Dorsolateral prefrontal cortex (tissue), 120 donors: ENCODE measurements at regions of chr15 and their contacts with region 1.

Region 1: DNA sequence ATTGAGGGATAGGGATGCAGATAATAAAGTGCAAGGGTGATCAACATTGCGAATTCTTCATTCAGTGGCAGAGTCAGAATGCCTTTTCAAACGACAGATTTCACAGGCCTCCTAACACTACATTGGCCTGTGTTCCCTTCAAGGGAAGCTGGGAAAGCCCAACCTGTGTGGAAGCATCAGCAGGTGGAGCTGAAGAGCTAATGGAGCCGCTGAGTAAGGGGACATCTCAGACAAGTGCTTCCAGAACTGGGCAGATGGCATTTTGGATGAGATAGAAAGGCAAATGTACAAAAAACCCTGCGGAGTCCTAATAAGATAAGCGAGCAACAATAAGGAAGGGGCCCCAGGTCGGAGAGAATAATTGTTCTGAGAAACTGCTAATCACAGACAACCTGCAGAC is 8.5 kb upstream of the SLC24A5 start:
- DNase-seq: peak in 1 of 10 donors; percentile 40
- H3K4me3 ChIP-seq: no peak overlapping the region
- H3K27ac ChIP-seq: no peak overlapping the region
- H3K27me3 ChIP-seq: peaks cover 0 to 5% (median 0%) of the 10 kb centered on the region in 45 donors
- CTCF ChIP-seq: peak in 13 of 56 donors; percentile 10 to 48 (median 22)

Region 2: GRCh38 chr15:47961401-47962090 is 150.7 kb before region 1 on chr15:
- intact Hi-C with region 1: no loop called
- DNase-seq: no peak
- H3K4me3 ChIP-seq: no peak overlapping the region
- H3K27ac ChIP-seq: no peak overlapping the region
- H3K27me3 ChIP-seq: no peaks in the 10 kb centered on the region
- CTCF ChIP-seq: no peak

Region 3: DNA sequence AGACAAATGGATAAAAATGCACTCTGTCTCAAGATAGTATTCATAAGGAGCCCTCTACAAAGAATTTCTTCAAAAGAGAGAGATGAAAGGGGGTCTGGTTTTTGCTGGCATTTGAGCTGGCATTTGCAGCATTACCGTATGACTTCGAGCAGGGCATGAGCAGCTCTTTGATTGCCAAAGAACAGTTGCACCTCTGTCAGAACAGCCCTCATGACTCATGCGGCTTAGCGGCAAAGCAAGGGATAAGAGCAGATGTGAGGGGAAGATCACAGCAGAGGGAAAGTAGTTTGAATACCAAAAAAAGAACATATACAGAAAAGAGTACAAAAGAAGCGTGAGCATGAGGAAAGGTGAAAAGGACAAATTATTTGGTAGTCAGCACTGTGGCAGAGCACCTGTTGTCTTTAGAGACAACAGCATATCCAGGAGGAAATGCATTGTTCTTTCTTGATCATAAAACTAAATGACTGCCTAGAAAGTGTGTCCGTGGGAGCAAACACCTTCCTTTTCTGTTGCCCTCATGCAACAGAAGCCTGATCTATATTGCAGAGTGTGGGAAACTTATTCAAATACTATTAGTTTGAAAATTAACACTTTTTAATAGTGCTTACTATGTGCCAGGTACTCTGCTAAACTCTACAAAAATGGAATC is 72.0 kb before region 1 on chr15:
- intact Hi-C with region 1: loop called in 1 of 2 experiments (anchors 10 kb)
- DNase-seq: peak in 4 of 10 donors; percentile 25 to 63 (median 43)
- H3K4me3 ChIP-seq: no peak overlapping the region
- H3K27ac ChIP-seq: no peak overlapping the region
- H3K27me3 ChIP-seq: no peaks in the 10 kb centered on the region
- CTCF ChIP-seq: no peak

Region 4: DNA sequence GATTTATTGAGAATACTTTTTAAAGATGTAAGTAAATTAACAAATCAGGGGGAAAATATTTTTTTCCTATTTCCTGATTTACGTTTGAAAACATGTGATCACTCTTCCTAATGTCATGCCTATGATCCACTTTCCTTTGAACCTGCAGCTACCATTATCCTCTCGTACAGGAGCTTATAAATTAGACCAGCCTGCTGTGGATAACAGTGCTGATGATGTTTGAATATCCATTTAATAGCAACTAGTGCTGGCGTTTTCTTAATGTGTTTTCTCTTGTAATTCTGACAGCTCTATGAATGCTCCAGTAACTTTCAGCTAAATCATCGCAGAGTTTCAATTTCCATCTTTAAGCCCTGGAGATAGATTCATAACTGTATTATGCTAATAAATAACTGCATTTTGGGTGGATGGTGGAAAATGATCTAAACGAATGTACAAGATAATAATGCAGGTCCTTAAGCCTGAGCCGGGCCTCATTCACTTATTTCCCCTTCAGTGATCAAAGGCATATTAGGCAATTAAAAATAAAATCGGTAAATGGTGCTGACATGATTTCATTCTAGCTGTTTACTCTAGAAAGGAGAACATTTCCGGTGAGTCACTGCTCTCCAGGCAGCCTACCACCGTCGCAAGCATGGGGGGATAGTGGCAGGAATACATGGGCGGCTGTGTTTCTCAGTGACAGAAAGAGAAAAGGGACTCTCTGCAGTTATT is 49.9 kb before region 1 on chr15:
- intact Hi-C with region 1: loop called in 1 of 2 experiments (anchors 5 kb)
- DNase-seq: no peak
- H3K4me3 ChIP-seq: no peak overlapping the region
- H3K27ac ChIP-seq: no peak overlapping the region
- H3K27me3 ChIP-seq: no peaks in the 10 kb centered on the region
- CTCF ChIP-seq: no peak